BJ (cell line): ENCODE measurements at regions of chr10 and their contacts with region 1.

Region 1: DNA sequence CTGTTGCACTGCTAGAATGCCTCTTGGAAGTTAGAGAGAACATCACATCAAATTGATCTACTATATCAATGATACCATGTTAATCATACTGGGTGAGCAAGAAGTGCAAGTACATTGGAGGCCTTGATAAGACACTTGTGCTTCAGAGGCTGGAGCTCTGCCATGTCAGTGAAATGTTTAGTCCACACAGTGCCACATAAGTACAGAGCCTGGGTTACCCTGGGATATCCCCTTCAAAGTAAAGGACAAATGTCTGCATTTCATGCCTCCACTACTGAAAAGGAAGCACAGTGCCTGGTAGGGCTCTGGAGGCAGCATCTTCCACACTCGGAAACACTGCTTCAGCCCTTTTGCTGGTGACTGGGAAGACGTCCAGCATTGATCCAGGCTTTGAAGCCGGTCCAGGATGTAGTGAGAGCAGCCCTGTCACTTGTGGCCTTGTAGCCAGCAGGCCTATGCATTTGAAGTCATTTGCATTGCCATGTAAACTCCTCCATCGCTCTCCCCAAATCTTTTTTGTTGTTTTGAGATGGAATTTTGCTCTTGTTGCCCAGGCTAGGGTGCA is 15.7 kb upstream of the STN1 start:
- DNase-seq: no peak
- H3K4me3 ChIP-seq: no peak overlapping the region
- H3K27me3 ChIP-seq: 0 out of 2 replicates have a peak, but pooled peaks cover 1% of the 10 kb centered on the region
- CTCF ChIP-seq: no peak

Region 2: DNA sequence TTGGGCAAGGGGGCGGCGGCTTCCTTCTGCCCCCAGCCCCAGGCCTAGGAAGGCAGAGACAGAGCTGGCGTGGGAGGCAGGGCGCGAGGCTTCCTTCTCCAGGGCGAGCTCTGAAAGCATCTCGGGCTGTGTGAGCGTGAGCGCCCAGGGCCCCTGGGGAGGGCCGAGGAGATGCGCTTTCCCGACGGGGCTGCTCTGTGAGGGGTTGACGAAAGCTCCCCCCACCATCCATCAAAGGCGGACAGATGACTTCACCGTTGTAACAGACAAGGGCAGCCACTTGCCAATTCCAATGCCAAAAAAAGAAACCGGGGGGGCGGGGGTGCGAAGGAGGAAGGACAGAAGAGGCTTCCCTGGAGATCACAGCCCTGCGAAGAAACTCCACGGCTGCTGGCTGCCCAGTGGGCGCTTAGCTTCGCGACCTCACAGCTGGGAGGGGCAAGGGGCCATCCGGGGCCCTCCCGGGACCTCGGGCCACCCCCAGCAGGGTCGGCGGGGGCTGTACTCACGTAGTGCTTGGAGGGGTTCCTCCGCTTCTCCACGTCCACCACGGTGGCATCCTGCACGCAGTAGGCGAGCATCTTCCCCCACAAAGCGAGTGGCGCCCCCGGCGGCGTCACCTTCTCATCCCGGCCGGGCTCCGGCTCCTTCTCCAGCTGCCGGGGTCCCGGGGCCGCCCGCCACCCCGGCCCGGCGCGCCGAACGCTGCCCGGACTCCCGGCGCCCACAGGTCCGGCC is 78.8 kb before region 1 on chr10:
- CTCF ChIA-PET with region 1: no interaction called
- POLR2A ChIA-PET with region 1: no interaction called
- DNase-seq: no peak
- H3K4me3 ChIP-seq: peak overlapping the region; percentile 66
- H3K27me3 ChIP-seq: no peaks in the 10 kb centered on the region
- CTCF ChIP-seq: peak; percentile 31; the same call in 1 of the 2 replicates

Region 3: GRCh38 chr10:103874730-103875129 is 58.9 kb before region 1 on chr10:
- CTCF ChIA-PET with region 1: no interaction called
- POLR2A ChIA-PET with region 1: no interaction called
- DNase-seq: no peak
- H3K4me3 ChIP-seq: no peak overlapping the region
- H3K27me3 ChIP-seq: no peaks in the 10 kb centered on the region
- CTCF ChIP-seq: no peak

Region 4: DNA sequence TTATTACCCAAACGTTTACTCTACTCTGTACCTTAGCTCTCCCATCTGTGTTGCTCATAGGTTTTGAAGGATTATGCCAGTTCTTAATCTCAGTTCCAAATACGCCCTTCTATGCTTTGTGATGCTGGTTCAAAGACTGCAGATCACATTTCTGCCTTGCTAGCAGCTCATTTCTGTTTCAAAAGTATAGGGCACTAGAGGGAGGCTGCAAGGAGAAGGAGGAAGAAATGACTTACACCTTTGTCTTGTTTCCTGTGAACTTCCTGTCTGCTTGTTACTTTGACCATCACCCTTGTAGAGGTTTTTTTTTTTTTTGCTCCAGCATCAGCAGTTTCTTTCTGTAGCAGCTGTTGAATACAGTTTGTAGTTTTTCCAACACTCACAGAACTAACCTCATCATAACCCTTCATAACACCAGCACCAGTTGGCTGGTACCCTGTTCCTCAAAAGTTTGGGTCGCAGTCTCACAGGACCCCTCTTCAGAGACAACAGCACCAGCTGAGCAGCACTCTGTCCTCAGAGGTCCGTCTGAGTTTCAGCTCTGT is 49.8 kb after region 1 on chr10:
- CTCF ChIA-PET with region 1: no interaction called
- POLR2A ChIA-PET with region 1: interaction called, 12 read pairs
- DNase-seq: no peak
- H3K4me3 ChIP-seq: no peak overlapping the region
- H3K27me3 ChIP-seq: no peaks in the 10 kb centered on the region
- CTCF ChIP-seq: no peak